Activated T-helper 1 cell treated with anti-CD3 and anti-CD28 coated beads, Interleukin-12 subunit alpha, Interleukin-12 subunit beta, Interleukin-2, Interleukin-4 antibody, amounts not matched to agents 30 ng/mL and 10 ng/mL and 1 ng/mL, durations not matched to agents 14 hours and 24 hours and 36 hours (primary cell): ENCODE measurements at regions of chr4 and their contacts with region 1.

Region 1: DNA sequence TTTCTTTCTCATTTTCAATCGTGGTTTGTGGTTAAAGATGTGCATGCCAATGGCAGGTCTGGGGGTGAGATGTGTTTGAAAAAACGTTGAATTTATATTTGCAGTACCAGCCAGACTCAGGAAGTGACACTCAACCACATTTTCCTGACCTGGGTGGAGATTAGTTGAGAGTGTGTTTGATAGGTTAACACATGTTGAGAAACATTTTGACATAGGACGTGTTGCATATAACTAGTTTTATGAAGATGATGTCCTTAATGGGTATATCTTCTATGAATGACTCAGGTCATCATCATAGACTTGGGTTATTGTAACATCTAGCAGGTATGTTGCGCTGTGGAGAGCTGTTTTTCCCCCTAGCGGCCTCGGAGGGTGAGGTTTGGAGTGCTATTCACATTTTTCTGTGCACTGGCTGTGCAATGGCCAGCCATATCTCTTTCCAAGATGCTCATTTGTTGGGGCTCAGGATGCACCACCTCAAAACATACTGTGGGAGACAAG is 21.7 kb upstream of the CD38 start:
- DNase-seq: peak; percentile 73
- H3K4me3 Mint-ChIP-seq: peak overlapping the region; percentile 76
- H3K27ac Mint-ChIP-seq: peak overlapping the region; percentile 94
- H3K4me1 Mint-ChIP-seq: peaks cover 54% of the 10 kb centered on the region
- H3K27me3 Mint-ChIP-seq: no peaks in the 10 kb centered on the region

Region 2: GRCh38 chr4:15655229-15656037 is 101.0 kb before region 1 on chr4 and contains the start of gene FBXL5:
- intact Hi-C with region 1: loop called (anchors 1 kb)
- DNase-seq: peak; percentile 84
- H3K4me3 Mint-ChIP-seq: peak within 1 kb of the TSS; percentile 99
- H3K27ac Mint-ChIP-seq: peak within 1 kb of the TSS; percentile 96
- H3K4me1 Mint-ChIP-seq: peaks cover 61% of the 10 kb centered on the region
- H3K27me3 Mint-ChIP-seq: no peaks in the 10 kb centered on the region
- total RNA-seq, gene FBXL5: 31.3 and 34.7 TPM in 2 replicates

Region 3: GRCh38 chr4:15729910-15730533 is 26.4 kb before region 1 on chr4:
- intact Hi-C with region 1: loop called (anchors 1 kb)
- DNase-seq: peak; percentile 16
- H3K4me3 Mint-ChIP-seq: no peak overlapping the region
- H3K27ac Mint-ChIP-seq: no peak overlapping the region
- H3K4me1 Mint-ChIP-seq: peaks cover 29% of the 10 kb centered on the region
- H3K27me3 Mint-ChIP-seq: peaks cover 3% of the 10 kb centered on the region

Region 4: GRCh38 chr4:15771216-15772058 is 15.0 kb after region 1 on chr4:
- intact Hi-C with region 1: loop called (anchors 1 kb)
- DNase-seq: peak; percentile 37
- H3K4me3 Mint-ChIP-seq: peak overlapping the region; percentile 66
- H3K27ac Mint-ChIP-seq: peak overlapping the region; percentile 86
- H3K4me1 Mint-ChIP-seq: peaks cover 85% of the 10 kb centered on the region
- H3K27me3 Mint-ChIP-seq: no peaks in the 10 kb centered on the region

Region 5: DNA sequence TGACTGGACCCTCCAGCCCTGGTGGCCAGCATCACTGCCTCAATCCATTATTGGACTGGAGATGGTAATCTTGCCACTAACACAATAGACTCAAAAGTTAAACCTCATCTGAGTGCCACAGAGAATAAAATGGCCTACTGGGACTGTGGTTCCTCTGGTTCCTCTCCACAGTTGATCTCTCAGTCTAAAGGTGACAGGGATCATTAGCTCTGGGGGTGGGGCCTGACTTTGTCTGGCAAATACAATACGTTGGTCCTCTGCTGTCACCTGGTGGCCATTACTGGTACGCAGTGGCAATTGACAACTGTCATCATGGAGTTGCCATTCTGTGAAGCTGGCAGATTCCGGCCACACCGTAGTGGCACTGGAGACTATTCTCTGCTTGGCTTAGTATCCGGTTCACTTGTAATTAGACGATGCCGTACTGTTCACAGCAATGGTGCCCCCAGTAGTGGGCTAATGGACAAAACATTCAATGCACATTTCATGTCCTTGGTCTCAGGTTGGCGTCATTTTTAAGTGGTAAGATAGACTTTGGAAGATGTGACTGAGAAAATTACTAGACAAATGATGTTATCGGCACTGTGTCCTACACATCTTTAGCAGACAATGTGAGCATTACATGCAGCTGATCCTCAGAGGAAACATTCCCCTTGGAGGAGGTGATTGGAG is 199.9 kb after region 1 on chr4:
- intact Hi-C with region 1: loop called (anchors 1 kb)
- DNase-seq: peak; percentile 61
- H3K4me3 Mint-ChIP-seq: no peak overlapping the region
- H3K27ac Mint-ChIP-seq: no peak overlapping the region
- H3K4me1 Mint-ChIP-seq: peaks cover 6% of the 10 kb centered on the region
- H3K27me3 Mint-ChIP-seq: peaks cover 11% of the 10 kb centered on the region